ENCODE measurements at regions of chr4 and their contacts with region 1.

Region 1: GRCh38 chr4:77146186-77147078 is 10.6 kb upstream of the CCNG2 start:
- DNase-seq: no peak
- CTCF ChIP-seq: no peak

Region 2: DNA sequence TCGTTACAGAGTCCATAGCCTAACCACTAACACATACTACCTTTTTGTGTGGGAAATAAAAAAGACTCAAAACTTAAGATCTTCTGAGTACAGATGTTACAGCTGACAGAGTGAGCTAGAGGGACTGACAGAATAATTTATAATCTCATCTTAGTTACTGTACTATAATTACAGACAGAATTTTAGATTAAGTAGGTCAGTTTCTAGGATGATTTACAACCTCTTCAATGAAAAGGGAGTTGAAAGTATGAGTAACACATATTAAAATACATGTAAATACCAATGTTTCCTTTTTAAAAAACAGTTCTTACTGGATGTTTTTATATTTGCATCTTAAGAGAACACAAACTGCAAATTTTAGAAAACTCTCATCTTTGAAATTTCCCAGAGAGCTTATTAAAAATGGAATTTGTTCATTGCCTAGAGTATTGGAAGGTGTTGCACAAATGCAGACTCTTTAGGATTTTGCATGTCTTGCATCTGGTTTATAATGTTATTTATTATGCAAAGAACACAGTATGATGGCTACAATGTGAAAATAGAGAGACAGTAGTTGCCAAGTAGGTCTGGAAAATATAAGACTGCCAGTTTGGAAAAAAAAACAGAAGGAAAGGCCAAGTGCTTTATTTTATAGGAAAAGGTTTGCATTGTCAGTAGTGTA is 13.7 kb before region 1 on chr4:
- CTCF ChIA-PET with region 1: interaction called, 16 read pairs
- POLR2A ChIA-PET with region 1: no interaction called
- DNase-seq: no peak
- CTCF ChIP-seq: no peak

Region 3: DNA sequence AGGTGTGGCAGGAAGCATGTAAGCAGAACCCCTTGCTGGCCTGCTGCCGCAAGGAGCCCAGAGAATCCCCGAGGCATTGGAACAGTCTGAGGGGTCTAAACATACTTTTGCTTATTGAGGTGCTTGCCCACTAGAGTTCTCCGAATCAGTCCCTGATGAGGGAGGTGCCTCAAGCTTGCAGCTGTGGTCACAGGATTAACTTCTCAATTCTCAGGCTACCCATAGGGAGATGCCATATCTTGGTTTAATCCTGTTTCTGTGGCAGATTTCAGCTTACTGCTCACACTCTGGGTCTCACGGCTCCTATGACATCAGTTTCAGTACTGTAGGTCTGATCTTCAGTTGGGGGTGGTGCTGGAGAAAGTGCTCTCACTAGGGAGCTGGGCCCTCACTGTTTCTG is 50.4 kb after region 1 on chr4:
- CTCF ChIA-PET with region 1: no interaction called
- POLR2A ChIA-PET with region 1: no interaction called
- DNase-seq: peak; percentile 18
- CTCF ChIP-seq: no peak

Region 4: DNA sequence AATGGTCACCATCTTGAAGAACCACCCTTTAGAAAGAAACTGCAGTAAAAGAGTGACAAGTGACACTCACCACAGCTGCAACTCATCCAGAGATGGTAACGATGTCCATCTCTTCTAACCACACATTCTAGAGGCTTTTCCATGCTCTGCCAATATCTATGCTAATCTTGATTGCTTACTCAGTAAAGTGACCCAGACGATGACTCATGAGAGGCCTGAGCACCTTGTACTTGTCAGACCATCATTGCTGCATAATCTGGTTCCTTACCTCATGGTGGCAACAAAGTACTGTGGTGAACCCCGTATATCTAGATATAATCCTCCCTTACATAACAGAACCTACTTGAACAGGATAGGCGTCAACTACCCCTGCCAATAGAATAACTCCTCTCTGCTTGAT is 86.2 kb after region 1 on chr4:
- CTCF ChIA-PET with region 1: no interaction called
- POLR2A ChIA-PET with region 1: no interaction called
- DNase-seq: no peak
- CTCF ChIP-seq: no peak